Heart right ventricle (tissue), 16 donors: ENCODE measurements at regions of chr18 and their contacts with region 1.

Region 1: DNA sequence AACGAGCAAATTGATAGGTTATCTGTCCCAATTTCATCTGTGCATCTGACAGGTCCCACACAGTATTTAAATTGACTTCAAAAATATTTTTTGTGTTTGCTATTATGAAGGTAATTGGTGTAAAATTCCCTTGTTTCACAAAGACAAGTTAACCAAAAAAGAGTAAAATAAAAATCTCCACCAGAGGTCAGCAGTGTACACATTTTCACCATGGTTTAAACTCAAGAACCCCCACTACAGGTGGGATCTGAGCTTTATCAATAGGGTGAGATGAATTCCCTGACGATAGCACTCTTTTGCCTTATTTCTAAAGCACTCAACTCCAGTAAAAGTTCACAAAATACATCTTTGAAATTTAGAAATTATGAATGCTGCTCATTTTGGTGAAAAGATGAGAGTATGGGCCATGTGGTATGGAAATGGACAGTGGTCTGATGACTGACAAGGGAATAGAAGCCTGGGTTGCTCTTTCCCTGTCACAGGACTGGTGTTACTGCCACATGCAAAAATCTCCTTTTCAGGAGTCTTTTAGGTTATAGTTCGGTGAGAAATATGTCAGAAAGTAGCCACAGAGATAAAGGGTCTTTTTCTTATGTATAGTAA is 68.0 kb downstream of the SERPINB8 start:
- DNase-seq: no peak
- ATAC-seq: no peak
- H3K4me3 ChIP-seq: no peak overlapping the region
- H3K27ac ChIP-seq: no peak overlapping the region
- H3K4me1 ChIP-seq: no peaks in the 10 kb centered on the region
- H3K27me3 ChIP-seq: peaks cover 0 to under 1% (median 0%) of the 10 kb centered on the region in 7 donors
- CTCF ChIP-seq: peak; percentile 17 to 71 (median 56)

Region 2: DNA sequence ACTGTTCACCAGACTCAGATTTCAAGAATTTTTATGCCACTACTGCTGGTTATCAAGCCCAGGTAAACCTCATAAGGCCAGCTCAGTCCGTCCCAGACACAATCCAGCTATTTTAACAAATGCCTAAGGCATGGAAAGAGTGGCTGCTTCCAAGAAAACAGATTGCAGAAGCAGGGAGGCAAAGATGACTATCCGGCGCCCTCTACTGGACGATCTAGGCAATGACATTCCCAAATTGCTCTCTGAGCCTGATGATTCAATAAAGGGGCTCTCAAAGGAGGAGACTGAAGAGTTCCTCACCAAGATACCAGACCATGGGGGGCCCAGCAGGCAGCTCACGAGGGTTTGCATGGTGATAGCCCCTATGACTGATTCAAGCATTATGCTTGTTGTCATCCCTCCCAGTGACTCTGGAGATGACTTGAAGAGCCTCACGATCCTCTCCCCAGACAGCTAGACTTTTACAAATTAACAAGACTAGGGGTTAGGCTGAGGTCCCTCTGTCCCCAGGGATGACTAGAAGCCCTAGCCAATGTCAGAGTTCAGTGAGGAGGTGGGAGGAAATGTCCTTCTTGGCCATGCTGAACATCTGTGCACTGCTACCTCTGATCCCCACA is 43.0 kb before region 1 on chr18:
- intact Hi-C with region 1: loop called in 1 of 10 experiments (anchors 1 kb)
- DNase-seq: peak in 1 of 2 donors; percentile 23
- ATAC-seq: peak in 4 of 8 donors; percentile 44 to 69 (median 52)
- H3K4me3 ChIP-seq: no peak overlapping the region
- H3K27ac ChIP-seq: no peak overlapping the region
- H3K4me1 ChIP-seq: no peaks in the 10 kb centered on the region
- H3K27me3 ChIP-seq: no peaks in the 10 kb centered on the region
- CTCF ChIP-seq: peak; percentile 74 to 89 (median 86)

Region 3: DNA sequence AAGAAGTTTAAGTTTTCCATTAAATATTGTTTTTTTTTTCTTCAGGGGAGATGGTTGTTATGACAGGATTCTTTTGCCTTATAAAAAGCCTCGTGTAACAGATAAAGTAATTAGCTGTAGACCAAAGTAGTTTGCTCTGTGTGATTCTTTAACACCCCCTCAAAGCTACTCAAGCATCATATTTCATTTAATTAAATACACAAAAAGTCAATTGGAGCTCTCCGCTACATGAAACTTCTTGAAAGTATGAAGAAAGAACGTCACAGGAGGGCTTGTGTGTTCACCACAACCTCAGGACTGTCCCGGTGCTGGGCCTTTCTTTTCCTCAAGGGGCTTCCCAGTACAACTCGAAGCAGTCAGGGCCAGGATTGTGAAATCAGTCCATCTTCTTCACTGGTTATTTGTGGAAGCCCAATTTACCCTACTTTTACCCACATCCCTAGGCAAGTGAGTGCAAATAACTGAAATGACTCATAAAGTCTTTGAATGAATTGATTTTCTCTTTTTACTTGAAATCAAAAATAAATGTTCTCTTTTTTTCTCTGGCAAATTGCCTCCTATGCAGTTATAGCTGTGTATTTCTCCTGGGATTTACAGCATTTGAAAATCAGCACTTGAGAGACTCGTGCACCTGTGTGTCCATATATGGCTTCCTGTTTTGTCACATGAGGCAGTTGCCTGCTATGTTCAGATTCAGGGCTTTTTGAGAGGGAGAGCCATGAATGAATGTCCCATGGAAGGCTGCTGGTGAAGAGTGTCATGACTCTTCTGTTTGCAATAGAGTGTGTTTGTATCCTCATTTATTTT is 62.4 kb after region 1 on chr18:
- intact Hi-C with region 1: no loop called
- DNase-seq: no peak
- ATAC-seq: no peak
- H3K4me3 ChIP-seq: no peak overlapping the region
- H3K27ac ChIP-seq: no peak overlapping the region
- H3K4me1 ChIP-seq: no peaks in the 10 kb centered on the region
- H3K27me3 ChIP-seq: peaks cover 0 to 4% (median 0%) of the 10 kb centered on the region in 7 donors
- CTCF ChIP-seq: no peak